ENCODE measurements at regions of chr7 and their contacts with region 1.

Region 1: GRCh38 chr7:94436018-94436604 is 41.4 kb downstream of the COL1A2 start:
- DNase-seq: peak; percentile 22
- H3K4me3 Mint-ChIP-seq: no peak overlapping the region
- H3K27ac Mint-ChIP-seq: no peak overlapping the region
- H3K4me1 Mint-ChIP-seq: no peaks in the 10 kb centered on the region
- H3K27me3 Mint-ChIP-seq: peaks cover 28% of the 10 kb centered on the region

Region 2: GRCh38 chr7:93799750-93800357 is 636.3 kb before region 1 on chr7:
- intact Hi-C with region 1: loop called (anchors 1 kb)
- DNase-seq: no peak
- H3K4me3 Mint-ChIP-seq: no peak overlapping the region
- H3K27ac Mint-ChIP-seq: no peak overlapping the region
- H3K4me1 Mint-ChIP-seq: no peaks in the 10 kb centered on the region
- H3K27me3 Mint-ChIP-seq: peaks cover 2% of the 10 kb centered on the region

Region 3: GRCh38 chr7:93902777-93903423 is 533.2 kb before region 1 on chr7:
- intact Hi-C with region 1: loop called (anchors 1 kb)
- DNase-seq: no peak
- H3K4me3 Mint-ChIP-seq: no peak overlapping the region
- H3K27ac Mint-ChIP-seq: no peak overlapping the region
- H3K4me1 Mint-ChIP-seq: no peaks in the 10 kb centered on the region
- H3K27me3 Mint-ChIP-seq: peaks cover 9% of the 10 kb centered on the region

Measured in activated T-helper 1 cell treated with anti-CD3 and anti-CD28 coated beads, Interleukin-12 subunit alpha, Interleukin-12 subunit beta, Interleukin-2, Interleukin-4 antibody, amounts not matched to agents 30 ng/mL and 10 ng/mL and 1 ng/mL, durations not matched to agents 14 hours and 24 hours and 36 hours (primary cell).